A549 (cell line): ENCODE measurements at regions of chr10 and their contacts with region 1.

Region 1: GRCh38 chr10:78211561-78212051 is 177.9 kb downstream of the RPS24 start:
- DNase-seq: peak; percentile 38 to 54
- ATAC-seq: peak in 1 of 2 experiments; percentile 78; a peak in 3 of 6 replicates
- H3K4me3 ChIP-seq: no peak overlapping the region
- H3K27ac ChIP-seq: peak overlapping the region; percentile 20 to 81; a peak in 5 of 6 replicates
- H3K4me1 ChIP-seq: peaks cover 11% of the 10 kb centered on the region
- CTCF ChIP-seq: peak; percentile 74
- EP300 ChIP-seq: no peak
- POLR2A ChIP-seq: no peak
- RAD21 ChIP-seq: peak; percentile 88 to 89

Region 2: DNA sequence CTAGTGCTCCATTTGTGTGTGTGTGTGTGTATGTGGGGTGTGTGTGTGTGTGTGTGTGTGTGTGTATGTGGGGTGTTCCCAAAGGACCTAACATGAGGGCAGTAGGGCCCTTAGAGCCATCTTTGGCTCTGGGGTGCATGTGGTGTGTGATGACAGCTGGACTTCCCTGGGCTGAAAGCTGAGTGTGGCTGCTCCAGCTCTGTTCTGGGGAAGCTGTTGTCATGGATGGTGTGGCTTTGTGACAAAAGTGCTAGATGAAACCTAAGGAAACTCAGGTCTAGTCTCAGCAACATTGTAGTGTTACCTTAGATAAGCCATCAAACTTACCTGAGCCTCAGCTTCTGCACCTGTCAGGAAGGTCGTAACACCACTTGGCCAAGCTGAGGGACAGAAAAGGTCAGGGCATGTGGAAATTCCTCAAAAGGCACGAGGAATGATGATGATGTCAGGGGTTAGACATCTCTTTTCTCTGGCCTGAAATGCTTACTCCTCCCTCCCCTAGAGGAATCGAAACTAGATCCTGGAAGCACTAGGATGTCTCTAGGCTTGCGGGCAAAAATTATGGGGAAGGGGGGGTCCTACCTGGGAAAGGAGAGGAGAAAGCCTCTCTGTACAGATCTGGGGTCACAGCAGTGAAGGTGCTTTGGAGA is 62.5 kb before region 1 on chr10:
- CTCF ChIA-PET with region 1: no interaction called
- POLR2A ChIA-PET with region 1: no interaction called
- DNase-seq: peak in 1 of 2 experiments; percentile 6
- ATAC-seq: 0 out of 6 replicates have a peak, but pooled peaks of 1 of the 2 experiments have one; percentile 32
- H3K4me3 ChIP-seq: no peak overlapping the region
- H3K27ac ChIP-seq: no peak overlapping the region
- H3K4me1 ChIP-seq: 0 out of 3 replicates have a peak, but pooled peaks cover 4% of the 10 kb centered on the region
- CTCF ChIP-seq: no peak
- EP300 ChIP-seq: no peak
- POLR2A ChIP-seq: no peak
- RAD21 ChIP-seq: no peak

Region 3: GRCh38 chr10:78199759-78200158 is 11.8 kb before region 1 on chr10:
- CTCF ChIA-PET with region 1: interaction called, 17 read pairs
- POLR2A ChIA-PET with region 1: interaction called, 3 read pairs
- DNase-seq: no peak
- ATAC-seq: no peak
- H3K4me3 ChIP-seq: no peak overlapping the region
- H3K27ac ChIP-seq: no peak overlapping the region
- H3K4me1 ChIP-seq: peaks cover 13% of the 10 kb centered on the region; the same call in 2 of the 3 replicates
- CTCF ChIP-seq: no peak
- EP300 ChIP-seq: no peak
- POLR2A ChIP-seq: no peak
- RAD21 ChIP-seq: no peak

Region 4: DNA sequence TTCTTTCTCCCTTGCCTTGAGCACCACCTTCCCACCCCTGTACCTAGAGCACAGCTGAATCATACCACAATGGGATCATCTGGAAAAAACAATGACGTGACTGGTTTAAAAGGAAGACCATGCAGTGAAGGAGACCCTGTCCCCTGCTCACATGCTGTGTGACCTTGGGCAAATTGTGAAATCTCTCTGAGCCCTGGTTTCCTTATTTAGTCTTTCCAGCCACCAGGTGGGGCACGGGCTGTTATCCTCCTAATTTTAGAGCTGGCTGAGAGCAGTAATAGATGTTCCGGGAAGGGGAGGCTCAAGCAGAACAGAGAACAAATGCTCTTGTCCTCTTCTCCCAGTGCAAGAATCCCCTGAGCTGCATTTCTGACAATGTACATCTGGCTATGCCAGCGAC is 20.3 kb after region 1 on chr10:
- CTCF ChIA-PET with region 1: interaction called, 10 read pairs
- POLR2A ChIA-PET with region 1: no interaction called
- DNase-seq: no peak
- ATAC-seq: peak in 1 of 2 experiments; percentile 55; a peak in 3 of 6 replicates
- H3K4me3 ChIP-seq: no peak overlapping the region
- H3K27ac ChIP-seq: peak overlapping the region in 1 of 2 experiments; percentile 29; a peak in 1 of 6 replicates
- H3K4me1 ChIP-seq: no peaks in the 10 kb centered on the region
- CTCF ChIP-seq: peak; percentile 24; the same call in 2 of the 3 replicates
- EP300 ChIP-seq: no peak
- POLR2A ChIP-seq: no peak
- RAD21 ChIP-seq: peak; percentile 33 to 37; a peak in 4 of 5 replicates